Activated CD8-positive, alpha-beta T cell treated with anti-CD3 and anti-CD28 coated beads for 36 hours (primary cell): ENCODE measurements at regions of chr15 and their contacts with region 1.

Region 1: DNA sequence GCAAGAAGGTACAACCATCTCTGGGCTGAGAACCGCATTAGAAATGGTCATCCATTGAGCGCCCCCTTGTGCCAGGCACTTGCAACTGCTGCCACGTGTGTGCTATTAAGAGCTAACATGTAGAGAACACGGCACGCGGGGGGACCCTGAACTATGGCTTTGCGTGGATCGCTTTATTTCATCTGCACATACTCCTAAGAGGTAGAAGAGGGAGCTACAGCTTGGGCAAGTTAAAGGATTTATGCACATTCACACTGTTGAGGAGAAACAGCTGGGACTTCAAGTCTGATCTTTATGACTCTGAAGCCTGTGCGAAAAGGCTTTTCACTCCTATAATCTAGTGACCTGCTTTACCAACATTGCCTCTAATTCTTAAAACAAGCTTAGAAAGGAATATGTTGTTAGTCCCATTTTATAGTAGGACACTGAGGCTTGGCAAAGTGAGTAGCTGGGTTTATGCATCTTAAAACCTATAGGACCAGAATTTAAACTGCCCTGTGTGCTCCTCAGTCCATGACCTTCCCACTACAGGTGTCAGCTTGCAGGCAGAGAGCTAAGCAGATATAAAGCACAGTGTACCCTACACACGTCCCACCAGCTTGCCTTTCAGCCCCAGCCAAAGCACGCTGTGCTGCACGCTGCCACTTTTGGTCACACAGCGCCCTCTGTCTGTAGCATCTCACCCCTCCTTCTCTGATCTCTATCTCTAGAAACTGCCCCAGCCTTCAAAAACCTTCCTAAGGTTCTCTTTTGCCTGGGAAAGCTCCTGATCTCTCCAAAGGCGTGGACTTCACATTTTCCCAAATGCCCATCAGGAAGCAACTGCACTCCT is 57.8 kb downstream of the STARD5 start:
- DNase-seq: peak; percentile 92
- ATAC-seq: peak; percentile 83
- H3K4me3 Mint-ChIP-seq: peak overlapping the region; percentile 56
- H3K27ac Mint-ChIP-seq: peak overlapping the region; percentile 82
- H3K4me1 Mint-ChIP-seq: peaks cover 49% of the 10 kb centered on the region
- H3K27me3 Mint-ChIP-seq: peaks cover 3% of the 10 kb centered on the region
- CTCF ChIP-seq: peak; percentile 68

Region 2: DNA sequence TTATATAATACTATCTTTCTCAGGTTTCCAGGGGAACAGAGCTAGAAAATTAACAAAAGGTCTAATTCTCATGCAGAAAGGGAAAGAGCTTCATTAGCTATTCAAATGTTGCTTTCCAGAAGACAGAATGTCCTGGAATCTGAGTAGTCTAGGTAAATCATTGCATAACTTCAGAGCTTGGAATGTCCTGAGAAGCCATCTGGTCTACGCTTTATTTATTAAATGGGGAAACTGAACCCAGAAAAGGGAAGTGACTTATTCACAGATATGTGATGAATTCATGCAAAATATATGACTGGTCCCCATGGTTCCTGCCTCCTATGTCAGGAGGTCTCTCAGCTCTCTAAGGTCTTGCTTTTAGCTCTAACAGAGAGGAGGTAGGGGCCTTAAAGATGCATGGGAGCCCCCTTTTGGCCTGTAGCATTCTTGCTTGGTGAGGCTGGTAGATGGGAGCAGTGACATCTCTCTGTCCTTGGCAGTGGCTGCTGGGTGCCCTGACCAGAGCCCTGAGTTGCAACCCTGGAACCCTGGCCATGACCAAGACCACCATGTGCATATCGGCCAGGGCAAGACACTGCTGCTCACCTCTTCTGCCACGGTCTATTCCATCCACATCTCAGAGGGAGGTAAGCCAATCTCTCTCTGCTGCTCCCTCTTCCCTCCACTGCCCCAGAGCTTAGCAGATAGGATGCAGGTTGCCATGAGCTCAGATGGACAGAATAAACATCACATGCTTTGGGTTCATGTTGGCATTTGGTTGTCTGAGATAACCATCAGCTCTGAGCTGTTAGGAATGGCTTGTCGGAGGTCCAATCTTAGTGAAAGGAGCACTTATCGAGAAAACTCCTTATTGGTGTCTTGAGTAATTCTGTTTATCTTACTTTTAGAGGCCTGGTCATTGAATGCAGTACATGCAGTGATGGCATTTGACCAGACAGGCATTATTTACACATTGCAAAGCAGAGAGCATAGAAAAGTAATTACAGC is 387.6 kb before region 1 on chr15:
- CTCF ChIA-PET with region 1: no interaction called
- POLR2A ChIA-PET with region 1: no interaction called
- intact Hi-C with region 1: no loop called
- DNase-seq: no peak
- ATAC-seq: no peak
- H3K4me3 Mint-ChIP-seq: no peak overlapping the region
- H3K27ac Mint-ChIP-seq: no peak overlapping the region
- H3K4me1 Mint-ChIP-seq: no peaks in the 10 kb centered on the region
- H3K27me3 Mint-ChIP-seq: peaks cover 7% of the 10 kb centered on the region
- CTCF ChIP-seq: no peak

Region 3: DNA sequence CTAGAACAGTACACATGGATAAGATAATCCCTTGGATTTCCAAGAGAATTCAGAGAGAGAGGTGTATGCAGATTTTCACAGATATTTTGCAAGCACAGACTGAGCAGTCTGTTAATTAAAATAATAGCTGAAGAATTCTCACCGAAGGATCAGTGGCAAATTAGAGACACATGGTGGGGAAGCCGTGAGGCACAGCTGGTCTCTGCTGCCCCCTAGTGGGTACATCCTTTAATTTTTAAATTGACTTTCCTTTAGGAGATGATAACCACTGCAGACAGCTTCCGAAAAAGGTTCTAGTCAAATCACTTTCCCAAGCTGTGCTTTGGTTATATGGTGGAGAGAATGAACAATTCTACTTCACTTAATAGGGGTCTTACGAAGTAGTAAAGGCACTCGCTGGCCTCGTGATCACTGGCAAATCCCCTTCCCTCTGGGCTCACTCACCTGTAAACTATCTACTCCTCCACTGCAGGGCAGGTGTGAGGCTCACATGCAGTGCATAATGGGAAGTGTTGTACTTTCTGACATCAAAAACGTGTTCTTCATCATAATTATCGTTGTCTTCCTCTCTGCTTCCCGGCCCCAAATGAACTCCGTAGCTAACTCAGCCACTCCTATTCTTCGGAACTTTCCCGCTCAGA is 296.0 kb before region 1 on chr15:
- CTCF ChIA-PET with region 1: interaction called, 34 read pairs
- POLR2A ChIA-PET with region 1: no interaction called
- intact Hi-C with region 1: no loop called
- DNase-seq: peak; percentile 74
- ATAC-seq: peak; percentile 65
- H3K4me3 Mint-ChIP-seq: no peak overlapping the region
- H3K27ac Mint-ChIP-seq: no peak overlapping the region
- H3K4me1 Mint-ChIP-seq: peaks cover 8% of the 10 kb centered on the region
- H3K27me3 Mint-ChIP-seq: no peaks in the 10 kb centered on the region
- CTCF ChIP-seq: peak; percentile 91

Region 4: DNA sequence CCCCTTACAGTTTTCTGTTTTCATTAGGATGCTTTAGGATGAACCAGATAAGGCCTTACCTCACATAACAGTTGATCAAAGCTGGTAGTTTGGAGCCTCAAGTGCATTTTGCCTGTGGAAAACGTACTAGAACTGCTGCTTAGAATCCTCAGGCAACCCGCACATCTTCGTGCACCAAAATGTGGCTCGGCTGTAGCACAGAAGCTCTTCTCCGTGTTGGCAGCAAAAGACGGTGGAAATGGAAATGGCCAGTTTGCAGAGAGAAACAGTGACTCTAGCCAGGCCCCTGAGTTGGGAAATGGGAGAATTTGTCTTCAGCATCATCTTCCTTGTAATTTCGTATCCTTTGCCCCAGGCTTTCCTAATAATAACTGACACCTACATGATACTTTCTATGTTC is 244.8 kb before region 1 on chr15:
- CTCF ChIA-PET with region 1: interaction called, 10 read pairs
- POLR2A ChIA-PET with region 1: no interaction called
- intact Hi-C with region 1: no loop called
- DNase-seq: no peak
- ATAC-seq: no peak
- H3K4me3 Mint-ChIP-seq: no peak overlapping the region
- H3K27ac Mint-ChIP-seq: no peak overlapping the region
- H3K4me1 Mint-ChIP-seq: peaks cover 24% of the 10 kb centered on the region
- H3K27me3 Mint-ChIP-seq: no peaks in the 10 kb centered on the region
- CTCF ChIP-seq: no peak

Region 5: GRCh38 chr15:81155375-81156218 is 110.6 kb before region 1 on chr15:
- CTCF ChIA-PET with region 1: interaction called, 148 read pairs
- POLR2A ChIA-PET with region 1: interaction called, 6 read pairs
- intact Hi-C with region 1: loop called (anchors 5 kb)
- DNase-seq: peak; percentile 22
- ATAC-seq: peak; percentile 61
- H3K4me3 Mint-ChIP-seq: no peak overlapping the region
- H3K27ac Mint-ChIP-seq: no peak overlapping the region
- H3K4me1 Mint-ChIP-seq: peaks cover 2% of the 10 kb centered on the region
- H3K27me3 Mint-ChIP-seq: no peaks in the 10 kb centered on the region
- CTCF ChIP-seq: peak; percentile 64

Region 6: DNA sequence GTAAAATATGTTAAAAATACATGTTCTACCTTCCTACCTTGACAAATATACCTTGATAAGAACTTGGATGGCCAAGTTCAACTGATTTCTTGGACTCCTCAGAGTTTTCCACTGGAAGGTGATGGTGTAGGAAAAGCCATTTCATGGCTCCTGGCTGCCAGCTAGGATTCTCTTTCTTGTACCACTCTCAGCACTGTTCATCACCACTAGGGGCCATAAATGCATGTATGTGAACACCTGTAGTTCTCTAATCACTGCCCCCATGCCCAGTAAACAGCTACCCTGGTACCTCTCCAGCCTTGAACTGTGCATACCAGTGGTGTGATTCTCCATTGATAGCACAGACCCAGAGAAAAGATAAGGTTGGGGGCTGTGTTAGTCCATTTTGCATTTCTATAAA is 31.3 kb before region 1 on chr15:
- CTCF ChIA-PET with region 1: interaction called, 13 read pairs
- POLR2A ChIA-PET with region 1: no interaction called
- intact Hi-C with region 1: no loop called
- DNase-seq: no peak
- ATAC-seq: no peak
- H3K4me3 Mint-ChIP-seq: no peak overlapping the region
- H3K27ac Mint-ChIP-seq: no peak overlapping the region
- H3K4me1 Mint-ChIP-seq: no peaks in the 10 kb centered on the region
- H3K27me3 Mint-ChIP-seq: no peaks in the 10 kb centered on the region
- CTCF ChIP-seq: no peak

Region 7: DNA sequence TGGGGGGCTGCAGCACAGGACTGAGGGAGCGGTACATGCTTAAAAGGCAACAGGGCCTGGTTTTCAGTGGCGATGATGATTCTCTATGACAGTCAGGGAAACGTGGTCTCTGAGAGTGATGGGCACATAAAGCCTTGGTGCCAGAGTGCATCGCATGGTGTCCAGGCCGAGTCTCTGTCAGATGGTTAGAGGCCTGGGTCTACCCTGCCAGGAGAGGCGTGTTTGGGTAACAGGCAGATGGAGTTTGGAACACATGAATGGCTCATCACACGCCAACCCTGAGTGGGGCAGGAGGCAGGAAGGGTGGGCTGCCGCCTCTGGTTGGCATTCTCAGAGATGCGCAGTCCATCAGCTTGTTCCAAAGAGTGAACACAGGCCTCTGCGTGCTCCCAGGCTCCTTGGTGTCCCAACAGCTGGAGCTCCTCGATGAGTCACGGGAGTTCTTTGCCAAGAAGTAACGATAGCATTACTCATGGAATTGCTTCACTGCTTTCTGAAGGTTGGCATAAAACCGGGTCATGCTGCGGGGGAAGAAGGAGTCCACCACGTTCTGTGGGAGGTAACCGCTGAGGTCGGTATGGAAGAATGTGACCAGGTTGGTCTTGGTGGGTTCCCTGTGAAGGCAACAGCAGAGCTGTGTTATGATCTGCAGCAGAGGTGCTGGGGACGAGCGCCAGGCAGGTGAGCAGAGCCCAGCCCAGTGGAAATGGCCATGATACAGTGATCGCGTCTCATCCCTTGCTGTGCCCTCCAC is 46.8 kb after region 1 on chr15:
- CTCF ChIA-PET with region 1: interaction called, 12 read pairs
- POLR2A ChIA-PET with region 1: no interaction called
- intact Hi-C with region 1: no loop called
- DNase-seq: no peak
- ATAC-seq: no peak
- H3K4me3 Mint-ChIP-seq: no peak overlapping the region
- H3K27ac Mint-ChIP-seq: peak overlapping the region; percentile 69
- H3K4me1 Mint-ChIP-seq: peaks cover 72% of the 10 kb centered on the region
- H3K27me3 Mint-ChIP-seq: no peaks in the 10 kb centered on the region
- CTCF ChIP-seq: no peak

Region 8: DNA sequence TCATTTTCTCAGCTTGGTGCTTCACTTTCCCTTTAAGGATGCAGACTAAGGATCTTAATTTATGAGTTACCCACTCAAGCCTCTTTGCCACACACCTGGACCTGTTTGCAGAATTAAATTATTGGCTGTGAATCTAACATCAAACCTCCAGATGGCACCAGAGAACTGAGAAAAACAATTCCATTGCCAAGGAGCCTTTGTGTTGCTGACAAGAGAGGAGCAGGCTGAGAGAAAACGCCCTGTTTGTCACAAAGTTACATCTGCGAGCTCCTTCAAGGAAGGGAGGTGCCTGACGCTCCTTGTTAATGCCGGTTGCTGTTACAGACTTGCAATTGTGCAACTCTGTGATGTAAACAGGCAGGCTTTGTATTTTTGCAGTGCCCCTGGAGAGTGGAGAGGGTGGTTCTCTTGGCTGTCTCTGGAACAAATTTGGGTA is 144.2 kb after region 1 on chr15:
- CTCF ChIA-PET with region 1: interaction called, 17 read pairs
- POLR2A ChIA-PET with region 1: no interaction called
- intact Hi-C with region 1: no loop called
- DNase-seq: peak; percentile 25
- ATAC-seq: peak; percentile 62
- H3K4me3 Mint-ChIP-seq: no peak overlapping the region
- H3K27ac Mint-ChIP-seq: no peak overlapping the region
- H3K4me1 Mint-ChIP-seq: peaks cover 9% of the 10 kb centered on the region
- H3K27me3 Mint-ChIP-seq: peaks cover 7% of the 10 kb centered on the region
- CTCF ChIP-seq: peak; percentile 43